MCF 10A (cell line): ENCODE measurements at regions of chr16 and their contacts with region 1.

Region 1: GRCh38 chr16:69330286-69331109 is at the start of gene PDF:
- DNase-seq: peak; percentile 93
- H3K4me3 Mint-ChIP-seq: peak within 1 kb of the TSS; percentile 81
- H3K27ac Mint-ChIP-seq: peak within 1 kb of the TSS; percentile 66
- H3K4me1 Mint-ChIP-seq: peaks cover 24% of the 10 kb centered on the region
- H3K27me3 Mint-ChIP-seq: no peaks in the 10 kb centered on the region
- CTCF ChIP-seq: no peak
- total RNA-seq, gene PDF: 19.4 and 24.8 TPM in 2 replicates

Region 2: DNA sequence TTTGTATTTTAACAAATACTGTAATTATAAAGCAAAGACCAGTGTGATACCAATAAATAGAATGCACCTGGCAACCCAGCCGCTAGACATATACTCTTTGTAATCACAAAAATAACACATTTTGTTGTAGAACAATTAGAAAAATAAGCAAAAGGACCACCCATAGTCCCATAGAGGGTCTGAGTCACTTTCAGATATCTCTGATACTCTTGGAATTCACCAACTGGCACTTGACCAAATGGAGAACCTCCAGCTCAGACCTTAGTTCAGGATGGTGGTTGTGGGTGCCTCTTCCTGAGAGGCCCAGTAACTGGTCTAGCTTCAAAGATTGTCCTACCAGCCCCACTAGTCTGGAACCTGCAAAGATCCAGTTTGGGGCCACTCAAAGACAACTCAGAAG is 56.1 kb after region 1 on chr16:
- CTCF ChIA-PET with region 1: interaction called, 3 read pairs
- POLR2A ChIA-PET with region 1: interaction called, 20 read pairs
- intact Hi-C with region 1: no loop called
- DNase-seq: no peak
- H3K4me3 Mint-ChIP-seq: peak overlapping the region; percentile 90
- H3K27ac Mint-ChIP-seq: no peak overlapping the region
- H3K4me1 Mint-ChIP-seq: peaks cover 18% of the 10 kb centered on the region
- H3K27me3 Mint-ChIP-seq: no peaks in the 10 kb centered on the region
- CTCF ChIP-seq: no peak